ENCODE measurements at regions of chrX and their contacts with region 1.

Region 1: GRCh38 chrX:154986826-154987576 is 35.5 kb downstream of the F8 start:
- DNase-seq: no peak
- ATAC-seq: no peak
- H3K4me3 ChIP-seq: no peak overlapping the region
- H3K27ac ChIP-seq: no peak overlapping the region
- H3K4me1 ChIP-seq: peaks cover 2% of the 10 kb centered on the region; the same call in 1 of the 2 replicates
- H3K27me3 ChIP-seq: no peaks in the 10 kb centered on the region
- CTCF ChIP-seq: peak in 2 of 3 experiments; percentile 9 to 42; a peak in 2 of 6 replicates
- EP300 ChIP-seq: no peak
- POLR2A ChIP-seq: no peak
- RAD21 ChIP-seq: peak; percentile 46

Region 2: GRCh38 chrX:154411322-154411980 is 575.5 kb before region 1 on chrX and contains the start of gene TAFAZZIN:
- CTCF ChIA-PET with region 1: no interaction called
- POLR2A ChIA-PET with region 1: no interaction called
- RAD21 ChIA-PET with region 1: no interaction called
- SMC1A ChIA-PET with region 1: no interaction called
- in situ Hi-C with region 1: no loop called
- intact Hi-C with region 1: no loop called
- DNase-seq: no peak
- ATAC-seq: peak; percentile 80
- H3K4me3 ChIP-seq: peak within 1 kb of the TSS; percentile 81
- H3K27ac ChIP-seq: peak within 1 kb of the TSS; percentile 86
- H3K4me1 ChIP-seq: no peaks in the 10 kb centered on the region
- H3K27me3 ChIP-seq: no peaks in the 10 kb centered on the region
- CTCF ChIP-seq: peak in 1 of 3 experiments; percentile 8; a peak in 1 of 6 replicates
- EP300 ChIP-seq: no peak
- POLR2A ChIP-seq: peak; percentile 82
- RAD21 ChIP-seq: no peak
- polyA plus RNA-seq, gene TAFAZZIN: 0.71 to 1.4 TPM

Region 3: GRCh38 chrX:154804957-154805695 is 181.9 kb before region 1 on chrX and contains the start of gene MPP1:
- CTCF ChIA-PET with region 1: no interaction called
- POLR2A ChIA-PET with region 1: no interaction called
- RAD21 ChIA-PET with region 1: no interaction called
- SMC1A ChIA-PET with region 1: no interaction called
- in situ Hi-C with region 1: no loop called
- intact Hi-C with region 1: no loop called
- DNase-seq: peak; percentile 36
- ATAC-seq: peak; percentile 99
- H3K4me3 ChIP-seq: peak within 1 kb of the TSS; percentile 70
- H3K27ac ChIP-seq: no peak within 1 kb of the TSS
- H3K4me1 ChIP-seq: no peaks in the 10 kb centered on the region
- H3K27me3 ChIP-seq: no peaks in the 10 kb centered on the region
- CTCF ChIP-seq: no peak
- EP300 ChIP-seq: no peak
- POLR2A ChIP-seq: peak; percentile 57
- RAD21 ChIP-seq: no peak
- polyA plus RNA-seq, gene MPP1: 11.9 to 17.9 TPM

Region 4: DNA sequence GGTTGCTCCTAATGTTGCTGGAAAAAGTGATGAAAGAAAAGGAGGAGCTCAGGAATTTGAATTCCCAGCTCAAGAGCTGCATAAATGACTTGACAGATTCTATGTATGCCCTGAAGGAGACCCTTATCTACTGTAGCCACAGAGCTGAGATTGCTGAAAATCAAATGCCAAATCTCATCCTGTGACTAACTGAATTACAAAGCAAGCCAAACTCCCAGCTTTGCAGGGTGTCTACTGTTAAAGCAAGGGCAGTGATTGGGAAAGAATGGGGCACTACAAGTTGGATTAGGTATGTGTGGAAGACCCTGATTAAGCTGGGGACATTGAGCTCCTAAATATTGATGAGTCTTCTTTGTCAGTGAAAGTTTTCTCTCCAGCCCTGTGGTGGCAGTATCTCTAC is 131.7 kb before region 1 on chrX:
- CTCF ChIA-PET with region 1: no interaction called
- POLR2A ChIA-PET with region 1: no interaction called
- RAD21 ChIA-PET with region 1: no interaction called
- SMC1A ChIA-PET with region 1: no interaction called
- in situ Hi-C with region 1: no loop called
- intact Hi-C with region 1: no loop called
- DNase-seq: no peak
- ATAC-seq: no peak
- H3K4me3 ChIP-seq: no peak overlapping the region
- H3K27ac ChIP-seq: no peak overlapping the region
- H3K4me1 ChIP-seq: no peaks in the 10 kb centered on the region
- H3K27me3 ChIP-seq: no peaks in the 10 kb centered on the region
- CTCF ChIP-seq: no peak
- EP300 ChIP-seq: no peak
- POLR2A ChIP-seq: no peak
- RAD21 ChIP-seq: no peak

Region 5: DNA sequence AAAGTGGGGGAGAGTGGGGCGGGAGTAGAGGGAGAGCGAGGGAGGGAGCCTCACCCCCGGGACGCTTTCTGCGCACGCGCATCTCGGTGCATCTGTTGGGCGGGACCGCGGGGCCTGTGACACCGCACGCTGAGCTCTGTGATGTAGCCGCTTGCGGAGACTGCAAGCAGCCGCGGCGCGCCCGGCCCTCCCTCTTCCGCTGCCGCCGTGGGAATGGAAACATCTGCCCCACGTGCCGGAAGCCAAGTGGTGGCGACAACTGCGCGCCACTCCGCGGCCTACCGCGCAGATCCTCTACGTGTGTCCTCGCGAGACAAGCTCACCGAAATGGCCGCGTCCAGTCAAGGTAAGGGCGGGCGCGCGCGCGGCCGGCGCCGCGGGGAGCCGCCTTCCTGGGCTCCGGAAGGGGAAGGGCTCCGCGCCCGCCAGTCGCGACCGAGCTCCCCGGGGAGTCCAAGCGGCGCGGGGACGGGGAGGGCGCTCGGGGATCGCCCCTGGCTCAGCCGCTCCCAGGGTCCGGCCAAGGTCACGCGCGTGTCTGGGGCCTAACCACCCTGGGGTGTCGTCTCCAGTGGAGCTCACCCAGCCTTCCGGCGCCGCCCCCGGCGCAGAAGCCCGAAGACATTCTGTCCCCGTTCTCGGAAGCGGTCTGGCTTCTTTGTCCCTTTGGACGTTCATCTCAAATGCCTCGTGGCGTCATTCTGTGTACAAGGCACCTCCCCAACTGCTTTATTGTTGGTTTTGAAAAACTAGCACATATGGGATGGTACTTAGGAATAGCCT is 39.9 kb after region 1 on chrX and contains the start of gene FUNDC2:
- CTCF ChIA-PET with region 1: interaction called, 4 read pairs
- POLR2A ChIA-PET with region 1: interaction called, 32 read pairs
- RAD21 ChIA-PET with region 1: interaction called, 12 read pairs
- SMC1A ChIA-PET with region 1: interaction called, 21 read pairs
- in situ Hi-C with region 1: loop called (anchors 5 kb)
- intact Hi-C with region 1: loop called (anchors 1 kb)
- DNase-seq: peak; percentile 80
- ATAC-seq: peak; percentile 87
- H3K4me3 ChIP-seq: peak within 1 kb of the TSS; percentile 70
- H3K27ac ChIP-seq: peak within 1 kb of the TSS; percentile 94
- H3K4me1 ChIP-seq: no peaks in the 10 kb centered on the region
- H3K27me3 ChIP-seq: no peaks in the 10 kb centered on the region
- CTCF ChIP-seq: no peak
- EP300 ChIP-seq: no peak
- POLR2A ChIP-seq: peak; percentile 88
- RAD21 ChIP-seq: no peak
- polyA plus RNA-seq, gene FUNDC2: 232 to 285 TPM

Region 6: GRCh38 chrX:155056877-155057792 is 70.1 kb after region 1 on chrX:
- CTCF ChIA-PET with region 1: interaction called, 181 read pairs
- POLR2A ChIA-PET with region 1: no interaction called
- RAD21 ChIA-PET with region 1: interaction called, 29 read pairs
- SMC1A ChIA-PET with region 1: interaction called, 145 read pairs
- in situ Hi-C with region 1: loop called (anchors 5 kb)
- intact Hi-C with region 1: loop called (anchors 1 kb)
- DNase-seq: peak; percentile 24
- ATAC-seq: peak; percentile 95
- H3K4me3 ChIP-seq: peak overlapping the region; percentile 24; the same call in 1 of the 2 replicates
- H3K27ac ChIP-seq: no peak overlapping the region; the same call in 1 of the 2 replicates
- H3K4me1 ChIP-seq: no peaks in the 10 kb centered on the region; the same call in 1 of the 2 replicates
- H3K27me3 ChIP-seq: no peaks in the 10 kb centered on the region
- CTCF ChIP-seq: peak; percentile 69 to 77 (median 73)
- EP300 ChIP-seq: no peak
- POLR2A ChIP-seq: no peak
- RAD21 ChIP-seq: peak; percentile 63

Region 7: DNA sequence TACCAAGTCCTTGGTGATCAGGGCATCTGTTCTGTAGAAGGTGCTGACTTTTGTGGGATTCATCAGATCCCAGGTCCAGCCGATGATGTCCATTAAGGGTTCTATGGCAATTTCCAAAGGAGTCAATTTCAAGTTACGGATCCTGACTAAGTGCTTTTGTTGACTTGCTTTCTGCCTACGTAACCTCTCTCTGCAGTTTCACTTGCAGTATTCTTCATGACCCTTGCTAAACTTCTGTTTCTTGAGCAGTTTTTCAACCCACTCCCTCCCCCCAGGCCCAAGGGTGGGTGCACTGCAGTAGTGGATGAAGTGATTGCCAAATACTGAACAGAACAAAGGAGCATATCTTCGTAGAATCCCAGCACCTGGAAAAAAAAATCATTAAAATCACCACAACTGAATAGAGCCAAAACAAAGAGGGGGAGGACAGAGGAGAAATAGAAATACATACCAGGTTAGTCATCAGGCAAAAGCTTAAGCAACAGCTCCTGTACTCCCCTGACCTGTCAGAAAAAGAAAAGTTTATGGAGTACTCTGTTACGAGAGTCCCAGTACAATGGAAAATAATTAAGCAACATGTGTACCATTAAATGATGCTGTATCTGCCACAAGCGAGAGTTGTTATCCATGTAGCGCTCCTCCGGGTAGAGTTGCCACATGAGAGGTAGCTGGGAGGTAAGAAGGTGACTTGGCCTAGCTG is 78.2 kb after region 1 on chrX:
- CTCF ChIA-PET with region 1: interaction called, 3 read pairs
- POLR2A ChIA-PET with region 1: no interaction called
- RAD21 ChIA-PET with region 1: interaction called, 4 read pairs
- SMC1A ChIA-PET with region 1: interaction called, 18 read pairs
- in situ Hi-C with region 1: no loop called
- intact Hi-C with region 1: no loop called
- DNase-seq: no peak
- ATAC-seq: no peak
- H3K4me3 ChIP-seq: no peak overlapping the region
- H3K27ac ChIP-seq: no peak overlapping the region
- H3K4me1 ChIP-seq: no peaks in the 10 kb centered on the region
- H3K27me3 ChIP-seq: no peaks in the 10 kb centered on the region
- CTCF ChIP-seq: no peak
- EP300 ChIP-seq: no peak
- POLR2A ChIP-seq: no peak
- RAD21 ChIP-seq: no peak

Region 8: DNA sequence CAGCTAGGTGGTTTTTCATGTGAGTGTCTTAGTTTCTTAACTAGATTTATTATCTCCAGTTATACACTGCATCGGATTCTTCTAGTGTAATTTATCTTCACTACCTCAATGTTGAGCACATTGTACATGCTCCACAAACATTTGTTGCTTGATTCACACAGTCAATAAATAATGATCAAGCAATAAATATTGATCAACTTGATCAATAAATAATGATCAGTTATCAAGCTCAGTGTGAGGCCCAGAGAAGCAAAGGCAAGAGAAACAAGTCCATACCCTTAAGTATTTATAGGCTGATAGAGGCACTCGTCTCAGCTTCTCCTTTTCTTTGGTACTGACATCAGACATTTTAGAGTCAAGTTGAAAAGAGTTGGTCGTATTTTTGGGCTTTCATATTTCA is 224.2 kb after region 1 on chrX:
- CTCF ChIA-PET with region 1: interaction called, 3 read pairs
- POLR2A ChIA-PET with region 1: no interaction called
- RAD21 ChIA-PET with region 1: no interaction called
- SMC1A ChIA-PET with region 1: no interaction called
- in situ Hi-C with region 1: loop called (anchors 5 kb)
- intact Hi-C with region 1: loop called (anchors 10 kb)
- DNase-seq: no peak
- ATAC-seq: no peak
- H3K4me3 ChIP-seq: no peak overlapping the region
- H3K27ac ChIP-seq: no peak overlapping the region
- H3K4me1 ChIP-seq: no peaks in the 10 kb centered on the region
- H3K27me3 ChIP-seq: no peaks in the 10 kb centered on the region
- CTCF ChIP-seq: no peak
- EP300 ChIP-seq: no peak
- POLR2A ChIP-seq: no peak
- RAD21 ChIP-seq: no peak